Sciatic nerve (tissue), 2 donors: ENCODE measurements at regions of chr16 and their contacts with region 1.

Region 1: GRCh38 chr16:55543472-55543871 is 23.0 kb upstream of the CAPNS2 start:
- DNase-seq: no peak
- ATAC-seq: peak; percentile 59

Region 2: DNA sequence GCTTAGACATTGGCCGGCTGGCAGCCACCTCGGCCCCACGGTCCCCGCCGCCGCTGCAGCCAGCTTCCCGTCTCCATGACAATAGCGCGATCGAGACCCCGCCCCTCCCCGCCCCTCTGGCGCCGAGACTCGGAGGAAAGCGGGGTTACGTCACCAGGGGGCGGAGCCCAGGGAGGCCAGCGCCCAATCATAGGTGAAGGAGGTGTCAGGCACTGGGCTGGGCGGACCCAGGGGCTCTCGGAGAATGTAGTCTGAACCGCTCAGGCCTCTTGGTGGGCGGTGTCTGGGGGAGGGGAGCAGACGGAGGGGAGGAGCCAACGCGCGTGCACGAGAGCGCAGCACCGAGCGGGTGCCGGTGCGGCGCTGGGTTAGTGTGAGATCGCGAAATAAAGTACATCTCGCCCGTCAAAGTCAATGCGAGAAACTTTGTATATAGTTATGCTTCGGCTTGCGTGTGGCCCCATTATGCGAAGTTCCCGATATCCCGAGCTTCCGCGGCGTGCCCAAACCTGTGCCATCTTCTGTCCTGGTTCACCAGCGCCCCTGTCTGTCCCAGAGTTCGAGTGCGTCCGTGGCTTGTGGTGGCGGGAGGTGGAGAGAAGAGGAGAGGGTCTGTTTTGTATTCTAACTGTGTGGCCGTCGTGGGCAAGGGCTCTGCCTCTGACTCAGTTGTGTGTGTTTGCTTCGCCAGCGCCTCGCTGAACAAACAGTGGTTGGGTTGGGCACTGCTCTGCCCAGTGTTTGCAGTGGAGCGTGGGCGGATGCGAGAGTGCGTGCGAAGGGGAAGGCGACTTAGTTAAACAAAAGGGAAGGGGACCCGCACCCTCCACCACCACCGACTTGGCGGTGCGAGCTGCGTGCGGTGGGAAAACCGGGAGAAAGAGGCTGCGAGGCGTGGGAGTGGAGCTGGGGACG is 614.1 kb before region 1 on chr16:
- intact Hi-C with region 1: loop called (anchors 5 kb)
- DNase-seq: peak; percentile 100
- ATAC-seq: peak; percentile 98

Region 3: GRCh38 chr16:55487048-55487803 is 56.2 kb before region 1 on chr16:
- intact Hi-C with region 1: loop called (anchors 5 kb)
- DNase-seq: no peak
- ATAC-seq: peak; percentile 72